ENCODE measurements at regions of chr1 and their contacts with region 1.

Region 1: DNA sequence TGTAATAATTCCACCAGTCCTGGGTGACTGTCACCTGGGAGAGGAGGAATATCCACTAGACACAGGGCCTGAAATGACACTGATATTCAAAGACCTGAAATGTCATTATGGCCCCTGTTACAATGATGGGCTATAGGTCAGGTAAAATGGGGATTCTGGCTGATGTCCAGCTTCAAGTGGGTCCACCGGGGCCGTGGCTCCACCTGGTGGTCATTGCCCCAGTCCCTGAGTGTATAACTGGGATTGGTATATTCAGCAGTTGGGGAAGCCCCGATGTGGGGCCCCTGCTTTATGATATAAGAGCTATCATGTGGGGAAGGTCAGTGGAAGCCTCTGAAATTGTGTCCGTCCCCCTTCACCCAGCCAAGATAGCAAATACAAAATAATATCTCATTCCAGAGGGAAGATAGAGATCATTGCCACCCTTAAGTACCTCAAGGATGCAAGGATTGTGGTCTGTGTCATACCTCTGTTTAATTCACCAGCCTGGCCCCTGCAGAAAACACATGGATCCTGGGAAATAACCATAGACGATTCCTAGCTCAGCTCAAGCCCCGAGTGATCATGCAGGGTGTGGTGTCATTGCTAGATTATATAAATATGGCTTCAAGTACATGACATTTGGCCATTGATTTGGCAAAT is 19.4 kb downstream of the PLEKHO1 start:
- DNase-seq: peak; percentile 61
- H3K4me3 ChIP-seq: no peak overlapping the region
- H3K27ac ChIP-seq: no peak overlapping the region
- H3K4me1 ChIP-seq: no peaks in the 10 kb centered on the region
- H3K27me3 ChIP-seq: no peaks in the 10 kb centered on the region
- CTCF ChIP-seq: peak; percentile 36 to 81 (median 76)
- POLR2A ChIP-seq: no peak

Region 2: GRCh38 chr1:149899460-149900293 is 269.4 kb before region 1 on chr1 and contains the start of gene BOLA1:
- intact Hi-C with region 1: no loop called
- DNase-seq: peak; percentile 95
- H3K4me3 ChIP-seq: peak within 1 kb of the TSS; percentile 42 to 54
- H3K27ac ChIP-seq: peak within 1 kb of the TSS; percentile 82 to 86
- H3K4me1 ChIP-seq: no peaks in the 10 kb centered on the region
- H3K27me3 ChIP-seq: no peaks in the 10 kb centered on the region
- CTCF ChIP-seq: peak in 1 of 4 experiments; percentile 7
- POLR2A ChIP-seq: peak; percentile 80
- total RNA-seq, gene BOLA1: 37.8 to 40.6 TPM

Region 3: DNA sequence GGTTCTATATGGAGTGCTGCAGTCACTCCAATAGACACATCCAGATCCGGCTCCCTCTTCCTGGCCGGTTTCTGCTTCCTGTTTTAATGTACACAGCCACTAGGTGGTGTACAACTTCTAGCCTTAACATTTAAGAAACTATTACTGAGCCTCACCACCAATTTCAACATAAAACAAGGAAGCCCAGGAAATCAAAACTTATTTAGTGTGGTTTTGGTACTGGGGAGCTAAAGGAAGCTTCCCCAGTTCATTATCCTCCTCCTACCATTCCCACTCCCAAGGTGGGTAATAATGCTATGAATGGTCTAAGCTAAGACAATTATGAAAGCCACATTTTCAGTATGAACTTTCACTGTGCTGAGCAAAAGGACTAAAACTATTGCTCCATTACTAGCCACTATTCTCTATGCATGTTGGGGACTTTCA is 206.9 kb before region 1 on chr1:
- intact Hi-C with region 1: loop called (anchors 5 kb)
- DNase-seq: peak; percentile 68
- H3K4me3 ChIP-seq: no peak overlapping the region
- H3K27ac ChIP-seq: peak overlapping the region; percentile 10 to 53
- H3K4me1 ChIP-seq: no peaks in the 10 kb centered on the region
- H3K27me3 ChIP-seq: no peaks in the 10 kb centered on the region
- CTCF ChIP-seq: peak; percentile 70 to 89 (median 84)
- POLR2A ChIP-seq: no peak

Region 4: DNA sequence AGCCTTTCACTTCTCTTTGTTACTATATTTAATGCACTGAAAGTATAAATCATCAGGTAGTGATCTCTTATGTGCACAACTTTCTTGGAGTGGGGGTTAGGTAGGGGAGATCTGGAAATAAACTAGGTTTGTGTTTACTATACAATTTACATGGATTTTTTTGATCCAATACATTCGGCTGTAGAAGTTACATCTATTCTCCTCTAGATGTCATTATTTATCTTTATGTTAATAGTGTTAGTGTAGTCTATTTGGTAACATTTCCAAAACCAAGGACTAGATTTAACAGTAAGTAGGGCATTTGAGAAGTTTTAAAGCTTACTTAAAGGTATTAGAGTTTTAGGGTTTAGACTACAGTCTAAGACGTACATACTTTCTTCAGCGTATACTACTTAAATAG is 96.1 kb before region 1 on chr1:
- intact Hi-C with region 1: loop called (anchors 1 kb)
- DNase-seq: no peak
- H3K4me3 ChIP-seq: no peak overlapping the region
- H3K27ac ChIP-seq: no peak overlapping the region
- H3K4me1 ChIP-seq: no peaks in the 10 kb centered on the region
- H3K27me3 ChIP-seq: no peaks in the 10 kb centered on the region
- CTCF ChIP-seq: peak in 2 of 4 experiments; percentile 34 to 49
- POLR2A ChIP-seq: no peak

Measured in prostate gland (tissue), 2 donors.